ENCODE measurements at regions of chr21 and their contacts with region 1.

Region 1: GRCh38 chr21:33199516-33200217 is 30.1 kb upstream of the IFNAR2 start:
- DNase-seq: peak; percentile 91 to 97 (median 96)
- H3K4me3 ChIP-seq: no peak overlapping the region
- H3K27ac ChIP-seq: no peak overlapping the region
- H3K4me1 ChIP-seq: peaks cover 0 to 14% (median 6%) of the 10 kb centered on the region in 4 experiments
- H3K27me3 ChIP-seq: no peaks in the 10 kb centered on the region

Region 2: GRCh38 chr21:32994305-32994704 is 205.4 kb before region 1 on chr21:
- CTCF ChIA-PET with region 1: interaction called, 29 read pairs
- POLR2A ChIA-PET with region 1: no interaction called
- DNase-seq: peak; percentile 17 to 43 (median 28)
- H3K4me3 ChIP-seq: no peak overlapping the region
- H3K27ac ChIP-seq: no peak overlapping the region
- H3K4me1 ChIP-seq: no peaks in the 10 kb centered on the region
- H3K27me3 ChIP-seq: peaks cover 0 to 22% (median 6%) of the 10 kb centered on the region in 5 experiments

Region 3: GRCh38 chr21:33127154-33127893 is 72.3 kb before region 1 on chr21:
- CTCF ChIA-PET with region 1: interaction called, 21 read pairs
- POLR2A ChIA-PET with region 1: no interaction called
- DNase-seq: peak; percentile 62 to 73 (median 67)
- H3K4me3 ChIP-seq: peak overlapping the region in 6 of 7 experiments; percentile 48 to 84 (median 62)
- H3K27ac ChIP-seq: no peak overlapping the region
- H3K4me1 ChIP-seq: peaks cover 0 to 14% (median 8%) of the 10 kb centered on the region in 4 experiments
- H3K27me3 ChIP-seq: peaks cover 0 to 17% (median 7%) of the 10 kb centered on the region in 5 experiments

Region 4: GRCh38 chr21:33185852-33186251 is 13.8 kb before region 1 on chr21:
- CTCF ChIA-PET with region 1: interaction called, 13 read pairs
- POLR2A ChIA-PET with region 1: no interaction called
- DNase-seq: no peak
- H3K4me3 ChIP-seq: no peak overlapping the region
- H3K27ac ChIP-seq: no peak overlapping the region
- H3K4me1 ChIP-seq: no peaks in the 10 kb centered on the region
- H3K27me3 ChIP-seq: peaks cover 0 to 8% (median 2%) of the 10 kb centered on the region in 5 experiments

Region 5: GRCh38 chr21:33444499-33444898 is 244.8 kb after region 1 on chr21:
- CTCF ChIA-PET with region 1: interaction called, 35 read pairs
- POLR2A ChIA-PET with region 1: interaction called, 4 read pairs
- DNase-seq: no peak
- H3K4me3 ChIP-seq: no peak overlapping the region
- H3K27ac ChIP-seq: no peak overlapping the region
- H3K4me1 ChIP-seq: no peaks in the 10 kb centered on the region
- H3K27me3 ChIP-seq: no peaks in the 10 kb centered on the region